B cell (primary cell): ENCODE measurements at regions of chr16 and their contacts with region 1.

Region 1: GRCh38 chr16:84738255-84739038 is 38.6 kb downstream of the USP10 start:
- DNase-seq: peak; percentile 89
- ATAC-seq: peak; percentile 89
- H3K4me3 ChIP-seq: no peak overlapping the region
- H3K4me3 Mint-ChIP-seq: peak overlapping the region; percentile 46
- H3K27ac ChIP-seq: no peak overlapping the region
- H3K27ac Mint-ChIP-seq: peak overlapping the region; percentile 27
- H3K4me1 ChIP-seq: peaks cover 6 to 12% of the 10 kb centered on the region in 2 donors
- H3K4me1 Mint-ChIP-seq: peaks cover 30% of the 10 kb centered on the region
- H3K27me3 ChIP-seq: no peaks in the 10 kb centered on the region
- H3K27me3 Mint-ChIP-seq: no peaks in the 10 kb centered on the region
- CTCF ChIP-seq: peak; percentile 96

Region 2: GRCh38 chr16:84504420-84505248 is 233.8 kb before region 1 on chr16 and contains the start of gene MEAK7:
- CTCF ChIA-PET with region 1: interaction called, 17 read pairs
- POLR2A ChIA-PET with region 1: interaction called, 3 read pairs
- intact Hi-C with region 1: no loop called
- DNase-seq: peak; percentile 98
- ATAC-seq: peak; percentile 97
- H3K4me3 ChIP-seq: peak within 1 kb of the TSS; percentile 63 to 88 (median 77)
- H3K4me3 Mint-ChIP-seq: peak within 1 kb of the TSS; percentile 95
- H3K27ac ChIP-seq: peak within 1 kb of the TSS; percentile 47 to 65
- H3K27ac Mint-ChIP-seq: peak within 1 kb of the TSS; percentile 90
- H3K4me1 ChIP-seq: peaks cover 33 to 44% of the 10 kb centered on the region in 2 donors
- H3K4me1 Mint-ChIP-seq: peaks cover 49% of the 10 kb centered on the region
- H3K27me3 ChIP-seq: no peaks in the 10 kb centered on the region
- H3K27me3 Mint-ChIP-seq: no peaks in the 10 kb centered on the region
- CTCF ChIP-seq: no peak
- total RNA-seq, gene MEAK7: 19.3 and 23.0 TPM in 2 replicates

Region 3: DNA sequence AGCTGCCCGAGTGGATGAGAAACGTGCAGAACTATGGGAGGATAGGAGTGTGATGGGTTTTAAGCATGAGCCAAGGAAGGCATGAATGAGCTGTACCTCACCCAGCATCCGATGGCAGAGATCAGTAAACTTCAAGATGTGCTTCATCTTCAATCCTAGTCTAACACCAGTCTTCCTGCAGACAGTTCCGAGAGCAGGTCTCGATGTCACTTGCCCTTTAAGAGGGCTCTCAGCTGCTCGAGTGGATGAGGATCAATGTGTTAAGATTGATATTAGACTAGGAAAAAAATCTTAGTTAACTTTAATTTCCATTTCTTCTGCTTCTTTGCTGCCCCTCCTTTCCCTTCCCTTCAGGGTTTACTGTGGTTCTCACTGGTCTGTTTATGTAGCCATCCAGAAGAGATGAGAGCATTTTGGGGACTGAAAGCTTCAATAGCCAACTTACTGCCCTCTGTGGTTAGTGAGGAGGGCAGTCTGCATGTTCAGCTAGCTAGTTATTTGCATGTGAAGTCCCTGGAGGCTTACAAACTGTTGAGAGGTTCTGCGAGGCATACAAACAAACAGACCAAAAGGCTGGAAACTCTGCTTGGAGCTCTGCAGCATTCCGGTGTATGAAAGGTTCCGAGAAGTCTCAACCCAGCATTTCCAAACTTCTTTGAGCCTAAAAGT is 74.9 kb before region 1 on chr16:
- CTCF ChIA-PET with region 1: interaction called, 29 read pairs
- POLR2A ChIA-PET with region 1: interaction called, 3 read pairs
- intact Hi-C with region 1: no loop called
- DNase-seq: peak; percentile 61
- ATAC-seq: peak; percentile 93
- H3K4me3 ChIP-seq: peak overlapping the region in 1 of 5 experiments; percentile 20
- H3K4me3 Mint-ChIP-seq: peak overlapping the region; percentile 78
- H3K27ac ChIP-seq: peak overlapping the region in 1 of 2 donors; percentile 16
- H3K27ac Mint-ChIP-seq: peak overlapping the region; percentile 69
- H3K4me1 ChIP-seq: peaks cover 23 to 24% of the 10 kb centered on the region in 2 donors
- H3K4me1 Mint-ChIP-seq: peaks cover 29% of the 10 kb centered on the region
- H3K27me3 ChIP-seq: no peaks in the 10 kb centered on the region
- H3K27me3 Mint-ChIP-seq: no peaks in the 10 kb centered on the region
- CTCF ChIP-seq: no peak

Region 4: DNA sequence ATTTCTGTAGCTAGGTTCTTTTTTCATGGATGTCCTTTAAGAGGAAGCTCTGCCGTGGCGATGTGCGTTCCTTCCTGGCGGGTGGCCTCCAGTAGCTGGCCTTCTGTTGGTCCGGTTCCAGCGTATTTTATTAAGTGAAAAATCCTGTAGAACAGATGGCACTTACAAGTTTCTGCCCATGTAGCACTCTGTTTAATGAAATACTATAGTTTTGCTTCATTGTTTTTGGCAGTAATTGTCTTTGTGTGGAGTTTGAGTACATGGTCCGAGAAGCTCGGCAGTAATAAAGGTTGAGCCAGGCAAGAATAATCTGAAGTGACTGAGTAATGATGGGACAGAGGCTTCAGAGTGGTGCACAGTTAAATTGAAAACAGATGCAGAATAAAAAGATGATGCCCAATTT is 18.3 kb before region 1 on chr16:
- CTCF ChIA-PET with region 1: interaction called, 63 read pairs
- POLR2A ChIA-PET with region 1: no interaction called
- intact Hi-C with region 1: no loop called
- DNase-seq: no peak
- ATAC-seq: no peak
- H3K4me3 ChIP-seq: no peak overlapping the region
- H3K4me3 Mint-ChIP-seq: no peak overlapping the region
- H3K27ac ChIP-seq: peak overlapping the region in 1 of 2 donors; percentile 1
- H3K27ac Mint-ChIP-seq: peak overlapping the region; percentile 26
- H3K4me1 ChIP-seq: peaks cover 16 to 24% of the 10 kb centered on the region in 2 donors
- H3K4me1 Mint-ChIP-seq: peaks cover 63% of the 10 kb centered on the region
- H3K27me3 ChIP-seq: no peaks in the 10 kb centered on the region
- H3K27me3 Mint-ChIP-seq: no peaks in the 10 kb centered on the region
- CTCF ChIP-seq: no peak

Region 5: DNA sequence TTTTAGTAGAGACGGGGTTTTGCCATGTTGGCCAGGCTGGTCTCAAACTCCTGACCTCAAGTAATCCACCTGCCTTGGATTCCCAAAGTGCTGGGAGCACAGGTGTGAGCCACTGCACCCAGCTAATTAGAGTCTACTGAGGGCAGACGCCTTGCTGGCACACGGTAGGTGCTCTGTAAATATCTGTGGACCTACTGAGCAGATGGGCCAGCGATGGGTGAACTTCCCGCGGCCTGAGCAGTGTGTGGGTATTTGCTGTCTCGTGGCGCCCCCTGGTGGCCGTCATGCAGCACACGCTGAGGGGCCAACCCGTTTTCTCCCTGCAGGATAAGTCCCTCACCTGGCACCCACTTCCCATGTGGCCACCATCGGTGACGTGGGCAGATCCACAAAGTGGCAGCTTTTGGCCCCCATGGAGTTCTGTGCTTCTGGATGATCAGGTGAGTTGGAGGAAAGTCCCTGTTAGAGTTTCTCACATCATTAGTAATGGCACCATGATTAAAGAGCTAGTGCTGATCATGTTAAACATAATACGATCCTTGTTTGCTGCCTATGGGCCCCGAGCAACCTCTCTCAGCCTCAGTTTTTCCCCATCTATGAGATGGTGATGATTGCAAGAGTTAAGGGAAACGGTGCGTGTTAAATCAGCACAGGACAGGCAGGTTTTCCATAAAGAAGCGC is 232.1 kb after region 1 on chr16:
- CTCF ChIA-PET with region 1: interaction called, 12 read pairs
- POLR2A ChIA-PET with region 1: no interaction called
- intact Hi-C with region 1: no loop called
- DNase-seq: peak; percentile 83
- ATAC-seq: peak; percentile 80
- H3K4me3 ChIP-seq: no peak overlapping the region
- H3K4me3 Mint-ChIP-seq: no peak overlapping the region
- H3K27ac ChIP-seq: no peak overlapping the region
- H3K27ac Mint-ChIP-seq: no peak overlapping the region
- H3K4me1 ChIP-seq: peaks cover 3 to 5% of the 10 kb centered on the region in 2 donors
- H3K4me1 Mint-ChIP-seq: peaks cover 4% of the 10 kb centered on the region
- H3K27me3 ChIP-seq: peaks cover 0 to 7% (median 0%) of the 10 kb centered on the region in 4 experiments
- H3K27me3 Mint-ChIP-seq: peaks cover 3% of the 10 kb centered on the region
- CTCF ChIP-seq: peak; percentile 92